SK-N-SH (cell line): ENCODE measurements at regions of chr4 and their contacts with region 1.

Region 1: DNA sequence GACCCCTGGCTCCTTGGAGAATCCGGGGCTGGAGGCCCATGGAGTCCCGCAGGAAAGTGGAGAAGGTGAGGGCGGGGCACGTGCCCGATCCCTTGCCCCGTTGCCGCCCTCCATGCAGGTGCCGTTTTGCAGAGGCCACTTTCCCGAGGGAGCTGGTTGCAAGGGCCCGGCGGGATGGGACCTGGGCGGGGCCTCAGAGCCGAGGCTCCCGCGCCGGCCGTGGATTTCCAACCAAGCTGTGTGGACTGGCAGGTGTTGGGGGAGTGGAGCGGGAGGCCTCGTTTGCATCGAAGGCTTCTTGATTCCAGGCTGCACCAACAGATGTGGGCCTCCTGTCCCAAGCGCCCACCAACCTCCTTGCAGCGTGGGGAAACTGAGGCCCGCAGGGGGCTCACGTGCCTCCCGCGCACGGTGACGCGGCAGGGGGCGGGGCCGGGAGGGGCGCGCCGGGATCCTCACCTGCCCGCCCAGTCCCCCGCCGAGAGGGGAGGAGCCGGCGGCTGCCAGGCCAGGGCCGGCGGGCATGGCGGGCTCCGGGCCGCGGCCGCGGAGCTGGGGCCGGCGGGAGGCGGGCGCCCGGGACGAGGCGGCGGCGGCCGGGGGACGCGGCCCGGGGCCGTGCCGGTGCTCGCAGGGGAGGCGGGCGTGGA is 24.9 kb downstream of the SH3BP2 start:
- DNase-seq: peak; percentile 95
- H3K4me3 ChIP-seq: peak overlapping the region; percentile 54 to 64; a peak in 3 of 4 replicates
- H3K27ac ChIP-seq: peak overlapping the region in 1 of 2 experiments; percentile 64; a peak in 1 of 4 replicates
- H3K4me1 ChIP-seq: peaks cover 0 to 21% of the 10 kb centered on the region in 2 experiments; a peak in 1 of 4 replicates
- H3K27me3 ChIP-seq: no peaks in the 10 kb centered on the region
- CTCF ChIP-seq: no peak
- EP300 ChIP-seq: no peak
- RAD21 ChIP-seq: no peak

Region 2: GRCh38 chr4:2767705-2768074 is 50.1 kb before region 1 on chr4:
- CTCF ChIA-PET with region 1: no interaction called
- POLR2A ChIA-PET with region 1: interaction called, 10 read pairs
- DNase-seq: peak; percentile 74
- H3K4me3 ChIP-seq: no peak overlapping the region
- H3K27ac ChIP-seq: peak overlapping the region in 1 of 2 experiments; percentile 74; a peak in 1 of 4 replicates
- H3K4me1 ChIP-seq: peaks cover 0 to 22% of the 10 kb centered on the region in 2 experiments; a peak in 1 of 4 replicates
- H3K27me3 ChIP-seq: no peaks in the 10 kb centered on the region
- CTCF ChIP-seq: no peak
- EP300 ChIP-seq: 0 out of 4 replicates have a peak, but pooled peaks of 1 of the 2 experiments have one; percentile 32
- RAD21 ChIP-seq: no peak

Region 3: GRCh38 chr4:2788089-2788475 is 29.7 kb before region 1 on chr4:
- CTCF ChIA-PET with region 1: no interaction called
- POLR2A ChIA-PET with region 1: no interaction called
- DNase-seq: no peak
- H3K4me3 ChIP-seq: no peak overlapping the region
- H3K27ac ChIP-seq: peak overlapping the region in 1 of 2 experiments; percentile 76; a peak in 2 of 4 replicates
- H3K4me1 ChIP-seq: peaks cover 0 to 24% of the 10 kb centered on the region in 2 experiments; a peak in 1 of 4 replicates
- H3K27me3 ChIP-seq: no peaks in the 10 kb centered on the region
- CTCF ChIP-seq: no peak
- EP300 ChIP-seq: no peak
- RAD21 ChIP-seq: no peak

Region 4: GRCh38 chr4:2798399-2799223 is 19.2 kb before region 1 on chr4:
- CTCF ChIA-PET with region 1: interaction called, 11 read pairs
- POLR2A ChIA-PET with region 1: no interaction called
- DNase-seq: peak; percentile 92
- H3K4me3 ChIP-seq: no peak overlapping the region
- H3K27ac ChIP-seq: peak overlapping the region; percentile 22 to 98; a peak in 3 of 4 replicates
- H3K4me1 ChIP-seq: peaks cover 30 to 79% of the 10 kb centered on the region in 2 experiments; a peak in 3 of 4 replicates
- H3K27me3 ChIP-seq: no peaks in the 10 kb centered on the region
- CTCF ChIP-seq: no peak
- EP300 ChIP-seq: peak in 1 of 2 experiments; percentile 67; a peak in 2 of 4 replicates
- RAD21 ChIP-seq: no peak

Region 5: DNA sequence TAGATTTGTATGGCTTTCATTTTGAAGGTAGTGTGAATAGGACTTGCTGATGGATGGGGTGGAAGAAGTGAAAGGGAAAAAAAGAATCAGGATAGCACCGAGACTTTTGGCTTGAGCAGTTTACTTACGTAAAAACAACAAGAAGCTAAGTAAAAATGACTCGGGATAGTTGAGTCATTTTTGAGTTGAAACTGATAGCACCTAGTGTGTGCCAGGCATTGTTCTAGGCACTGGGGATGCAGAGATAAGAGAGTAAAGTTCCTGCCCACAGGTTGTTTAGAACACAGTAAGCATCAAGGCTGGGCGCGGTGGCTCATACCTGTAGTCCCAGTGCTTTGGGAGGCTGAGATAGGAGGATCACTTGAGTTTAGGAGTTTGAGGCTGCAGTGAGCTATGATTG is 60.5 kb after region 1 on chr4:
- CTCF ChIA-PET with region 1: no interaction called
- POLR2A ChIA-PET with region 1: no interaction called
- DNase-seq: no peak
- H3K4me3 ChIP-seq: no peak overlapping the region
- H3K27ac ChIP-seq: no peak overlapping the region
- H3K4me1 ChIP-seq: peaks cover 0 to under 1% of the 10 kb centered on the region in 2 experiments; a peak in 1 of 4 replicates
- H3K27me3 ChIP-seq: no peaks in the 10 kb centered on the region
- CTCF ChIP-seq: no peak
- EP300 ChIP-seq: no peak
- RAD21 ChIP-seq: no peak

Region 6: GRCh38 chr4:3168029-3168428 is 350.2 kb after region 1 on chr4:
- CTCF ChIA-PET with region 1: no interaction called
- POLR2A ChIA-PET with region 1: no interaction called
- DNase-seq: peak; percentile 10
- H3K4me3 ChIP-seq: no peak overlapping the region
- H3K27ac ChIP-seq: peak overlapping the region in 1 of 2 experiments; percentile 9; a peak in 1 of 4 replicates
- H3K4me1 ChIP-seq: peaks cover 0 to 4% of the 10 kb centered on the region in 2 experiments; a peak in 1 of 4 replicates
- H3K27me3 ChIP-seq: no peaks in the 10 kb centered on the region
- CTCF ChIP-seq: no peak
- EP300 ChIP-seq: no peak
- RAD21 ChIP-seq: no peak